ENCODE measurements at regions of chr10 and their contacts with region 1.

Region 1: GRCh38 chr10:93376372-93377293 is 105.5 kb downstream of the MYOF start:
- DNase-seq: peak; percentile 67
- H3K4me3 Mint-ChIP-seq: no peak overlapping the region
- H3K27ac Mint-ChIP-seq: peak overlapping the region; percentile 6
- H3K4me1 Mint-ChIP-seq: peaks cover 27% of the 10 kb centered on the region
- H3K27me3 Mint-ChIP-seq: no peaks in the 10 kb centered on the region

Region 2: DNA sequence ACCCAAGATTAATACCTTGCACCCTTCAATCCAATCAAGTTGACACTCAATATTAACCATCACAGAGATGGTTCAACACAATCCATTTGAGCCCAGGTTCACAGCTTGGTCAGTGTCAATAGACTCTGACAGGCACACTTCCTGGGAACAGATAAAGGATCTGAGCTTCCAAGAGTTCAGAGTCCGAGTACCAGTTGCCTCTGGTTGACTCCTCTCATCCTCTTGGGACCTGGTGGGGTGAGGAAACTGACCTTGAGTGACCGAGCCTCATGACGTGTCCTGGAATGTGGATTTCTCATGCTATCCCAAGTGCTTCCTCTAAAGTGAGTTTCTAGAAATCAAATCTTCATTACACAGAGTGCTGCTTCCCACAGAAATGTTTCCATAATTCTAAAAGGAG is 140.9 kb before region 1 on chr10:
- CTCF ChIA-PET with region 1: no interaction called
- POLR2A ChIA-PET with region 1: no interaction called
- DNase-seq: no peak
- H3K4me3 Mint-ChIP-seq: no peak overlapping the region
- H3K27ac Mint-ChIP-seq: no peak overlapping the region
- H3K4me1 Mint-ChIP-seq: no peaks in the 10 kb centered on the region
- H3K27me3 Mint-ChIP-seq: peaks cover 7% of the 10 kb centered on the region

Region 3: DNA sequence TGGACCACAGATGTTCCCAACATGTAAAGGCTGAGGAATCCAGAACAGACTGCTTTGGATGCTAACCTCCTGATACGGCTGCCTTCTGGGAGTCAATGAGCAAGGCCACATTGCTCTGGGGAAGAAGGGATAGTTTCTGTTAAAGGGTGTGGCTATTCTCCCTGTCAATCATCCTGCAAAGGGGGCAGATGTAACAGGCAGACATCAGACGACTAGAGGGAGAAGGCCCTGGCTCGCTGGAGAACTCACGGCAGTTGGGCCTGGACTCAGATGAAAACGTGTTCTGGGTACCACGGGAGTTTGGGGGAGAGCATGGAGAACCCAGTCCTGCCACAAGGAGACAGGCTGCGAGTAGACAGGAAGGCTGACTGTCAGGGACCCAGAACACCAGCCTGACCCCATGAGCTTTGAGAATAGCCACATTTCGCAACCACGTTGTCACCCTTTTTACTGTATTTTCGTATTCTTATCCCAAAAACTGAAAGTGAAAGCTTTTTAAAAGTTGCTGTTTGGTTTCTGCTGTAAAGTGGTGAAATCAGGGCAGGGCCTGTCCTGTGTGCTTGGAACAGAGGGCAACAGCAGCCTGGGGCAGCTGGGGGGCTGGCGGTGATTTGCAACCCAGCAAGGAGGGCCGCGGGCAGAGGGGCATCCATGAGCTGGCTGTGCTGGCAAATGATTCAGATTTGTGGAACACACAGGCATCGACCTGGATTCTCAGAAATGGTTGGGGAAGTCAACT is 10.2 kb after region 1 on chr10:
- CTCF ChIA-PET with region 1: interaction called, 16 read pairs
- POLR2A ChIA-PET with region 1: no interaction called
- DNase-seq: peak; percentile 21
- H3K4me3 Mint-ChIP-seq: peak overlapping the region; percentile 1
- H3K27ac Mint-ChIP-seq: peak overlapping the region; percentile 92
- H3K4me1 Mint-ChIP-seq: peaks cover 29% of the 10 kb centered on the region
- H3K27me3 Mint-ChIP-seq: no peaks in the 10 kb centered on the region

Region 4: GRCh38 chr10:93463678-93464476 is 87.2 kb after region 1 on chr10:
- CTCF ChIA-PET with region 1: interaction called, 16 read pairs
- POLR2A ChIA-PET with region 1: no interaction called
- DNase-seq: no peak
- H3K4me3 Mint-ChIP-seq: no peak overlapping the region
- H3K27ac Mint-ChIP-seq: no peak overlapping the region
- H3K4me1 Mint-ChIP-seq: peaks cover 21% of the 10 kb centered on the region
- H3K27me3 Mint-ChIP-seq: no peaks in the 10 kb centered on the region

Region 5: GRCh38 chr10:93471110-93471651 is 94.5 kb after region 1 on chr10:
- CTCF ChIA-PET with region 1: interaction called, 20 read pairs
- POLR2A ChIA-PET with region 1: no interaction called
- DNase-seq: no peak
- H3K4me3 Mint-ChIP-seq: no peak overlapping the region
- H3K27ac Mint-ChIP-seq: no peak overlapping the region
- H3K4me1 Mint-ChIP-seq: no peaks in the 10 kb centered on the region
- H3K27me3 Mint-ChIP-seq: no peaks in the 10 kb centered on the region

Region 6: DNA sequence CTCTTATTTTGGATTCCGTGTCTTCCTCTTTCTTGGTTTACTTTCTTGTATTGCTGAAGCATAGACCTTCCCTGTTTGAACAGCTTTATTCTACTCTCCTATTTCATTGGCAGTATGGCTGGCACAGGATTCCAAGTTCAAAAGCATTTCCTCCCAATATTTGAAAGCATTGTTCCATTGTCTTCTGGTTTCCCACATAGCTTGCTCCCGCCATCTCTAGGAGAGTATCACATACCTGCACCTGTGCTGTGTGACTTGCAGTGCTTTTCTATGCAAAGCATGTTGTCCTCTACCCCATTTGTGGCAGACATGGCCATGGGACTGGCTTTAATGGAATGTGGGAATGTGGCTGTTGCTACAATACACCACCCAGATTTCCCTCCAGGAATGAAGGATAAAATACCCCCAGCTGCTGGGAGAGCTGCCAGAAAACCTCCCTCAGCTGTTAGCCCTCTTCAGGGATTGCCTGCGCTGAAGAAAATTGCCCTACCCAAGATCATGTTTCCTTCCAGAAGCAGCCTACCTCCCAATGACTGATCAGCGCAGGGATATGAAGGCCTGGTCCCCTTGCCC is 112.4 kb after region 1 on chr10:
- CTCF ChIA-PET with region 1: interaction called, 109 read pairs
- POLR2A ChIA-PET with region 1: interaction called, 3 read pairs
- DNase-seq: no peak
- H3K4me3 Mint-ChIP-seq: no peak overlapping the region
- H3K27ac Mint-ChIP-seq: no peak overlapping the region
- H3K4me1 Mint-ChIP-seq: no peaks in the 10 kb centered on the region
- H3K27me3 Mint-ChIP-seq: peaks cover 8% of the 10 kb centered on the region

Region 7: DNA sequence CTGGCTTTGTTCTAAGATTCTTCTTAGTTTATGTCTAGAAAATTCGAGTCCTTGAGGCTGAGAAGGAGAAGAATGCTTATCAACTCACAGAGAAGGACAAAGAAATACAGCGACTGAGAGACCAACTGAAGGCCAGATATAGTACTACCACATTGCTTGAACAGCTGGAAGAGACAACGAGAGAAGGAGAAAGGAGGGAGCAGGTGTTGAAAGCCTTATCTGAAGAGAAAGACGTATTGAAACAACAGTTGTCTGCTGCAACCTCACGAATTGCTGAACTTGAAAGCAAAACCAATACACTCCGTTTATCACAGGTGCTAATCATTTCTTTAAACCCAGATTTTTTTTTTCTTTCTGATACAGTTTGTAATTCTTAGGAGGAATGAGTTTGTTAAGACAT is 126.4 kb after region 1 on chr10:
- CTCF ChIA-PET with region 1: interaction called, 14 read pairs
- POLR2A ChIA-PET with region 1: no interaction called
- DNase-seq: no peak
- H3K4me3 Mint-ChIP-seq: peak overlapping the region; percentile 65
- H3K27ac Mint-ChIP-seq: peak overlapping the region; percentile 89
- H3K4me1 Mint-ChIP-seq: peaks cover 51% of the 10 kb centered on the region
- H3K27me3 Mint-ChIP-seq: no peaks in the 10 kb centered on the region

Measured in activated CD4-positive, alpha-beta T cell treated with anti-CD3 and anti-CD28 coated beads, Interleukin-2, amount 10 ng/mL, durations not matched to agents 7 days and 5 days (primary cell).